ENCODE measurements at regions of chr18 and their contacts with region 1.

Region 1: GRCh38 chr18:70503060-70503459 is 214.2 kb downstream of the SOCS6 start:
- DNase-seq: peak; percentile 65
- H3K4me3 ChIP-seq: no peak overlapping the region
- H3K27ac ChIP-seq: peak overlapping the region; percentile 43
- H3K4me1 ChIP-seq: peaks cover 33% of the 10 kb centered on the region
- H3K27me3 ChIP-seq: no peaks in the 10 kb centered on the region
- CTCF ChIP-seq: no peak

Region 2: DNA sequence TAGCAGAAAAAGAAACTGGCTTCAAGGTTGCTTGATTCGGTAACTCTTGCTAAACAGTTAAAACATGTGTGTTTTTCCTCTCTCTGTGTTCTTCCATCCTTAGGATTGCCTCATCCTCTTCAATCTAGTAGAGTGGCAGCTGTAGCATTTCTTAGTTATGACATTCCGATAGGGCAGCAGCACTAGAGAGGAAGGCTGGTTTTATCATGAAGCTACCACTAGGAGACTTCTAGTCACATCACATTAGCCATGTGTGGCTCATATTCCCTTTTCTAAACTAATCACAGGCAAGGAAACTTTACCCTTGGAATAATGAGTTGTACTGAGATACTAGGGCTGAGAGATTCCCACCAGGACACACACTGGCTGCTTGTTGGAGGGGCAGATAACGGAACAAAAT is 914.8 kb before region 1 on chr18:
- CTCF ChIA-PET with region 1: no interaction called
- POLR2A ChIA-PET with region 1: no interaction called
- intact Hi-C with region 1: no loop called
- DNase-seq: peak; percentile 33
- H3K4me3 ChIP-seq: no peak overlapping the region
- H3K27ac ChIP-seq: no peak overlapping the region
- H3K4me1 ChIP-seq: no peaks in the 10 kb centered on the region
- H3K27me3 ChIP-seq: no peaks in the 10 kb centered on the region
- CTCF ChIP-seq: peak; percentile 39

Region 3: GRCh38 chr18:70454704-70455322 is 48.2 kb before region 1 on chr18:
- CTCF ChIA-PET with region 1: no interaction called
- POLR2A ChIA-PET with region 1: no interaction called
- intact Hi-C with region 1: no loop called
- DNase-seq: peak; percentile 77
- H3K4me3 ChIP-seq: no peak overlapping the region
- H3K27ac ChIP-seq: no peak overlapping the region
- H3K4me1 ChIP-seq: no peaks in the 10 kb centered on the region
- H3K27me3 ChIP-seq: no peaks in the 10 kb centered on the region
- CTCF ChIP-seq: peak; percentile 88

Region 4: GRCh38 chr18:70553245-70553935 is 50.3 kb after region 1 on chr18:
- CTCF ChIA-PET with region 1: no interaction called
- POLR2A ChIA-PET with region 1: no interaction called
- intact Hi-C with region 1: loop called (anchors 2 kb)
- DNase-seq: peak; percentile 91
- H3K4me3 ChIP-seq: peak overlapping the region; percentile 34
- H3K27ac ChIP-seq: peak overlapping the region; percentile 93
- H3K4me1 ChIP-seq: peaks cover 38% of the 10 kb centered on the region
- H3K27me3 ChIP-seq: no peaks in the 10 kb centered on the region
- CTCF ChIP-seq: no peak